ENCODE measurements at regions of chr9 and their contacts with region 1.

Region 1: GRCh38 chr9:137034863-137035761 is 3.2 kb upstream of the FUT7 start:
- DNase-seq: peak; percentile 79
- H3K4me3 Mint-ChIP-seq: peak overlapping the region; percentile 55
- H3K27ac Mint-ChIP-seq: no peak overlapping the region
- H3K4me1 Mint-ChIP-seq: peaks cover 8% of the 10 kb centered on the region
- H3K27me3 Mint-ChIP-seq: no peaks in the 10 kb centered on the region
- CTCF ChIP-seq: peak; percentile 64

Region 2: GRCh38 chr9:136787690-136788400 is 247.3 kb before region 1 on chr9:
- CTCF ChIA-PET with region 1: no interaction called
- intact Hi-C with region 1: loop called (anchors 2 kb)
- DNase-seq: peak; percentile 52
- H3K4me3 Mint-ChIP-seq: peak overlapping the region; percentile 43
- H3K27ac Mint-ChIP-seq: no peak overlapping the region
- H3K4me1 Mint-ChIP-seq: peaks cover 48% of the 10 kb centered on the region
- H3K27me3 Mint-ChIP-seq: no peaks in the 10 kb centered on the region
- CTCF ChIP-seq: peak; percentile 74

Region 3: GRCh38 chr9:136965771-136966484 is 69.2 kb before region 1 on chr9:
- CTCF ChIA-PET with region 1: no interaction called
- intact Hi-C with region 1: no loop called
- DNase-seq: no peak
- H3K4me3 Mint-ChIP-seq: no peak overlapping the region
- H3K27ac Mint-ChIP-seq: no peak overlapping the region
- H3K4me1 Mint-ChIP-seq: no peaks in the 10 kb centered on the region
- H3K27me3 Mint-ChIP-seq: no peaks in the 10 kb centered on the region
- CTCF ChIP-seq: no peak

Region 4: DNA sequence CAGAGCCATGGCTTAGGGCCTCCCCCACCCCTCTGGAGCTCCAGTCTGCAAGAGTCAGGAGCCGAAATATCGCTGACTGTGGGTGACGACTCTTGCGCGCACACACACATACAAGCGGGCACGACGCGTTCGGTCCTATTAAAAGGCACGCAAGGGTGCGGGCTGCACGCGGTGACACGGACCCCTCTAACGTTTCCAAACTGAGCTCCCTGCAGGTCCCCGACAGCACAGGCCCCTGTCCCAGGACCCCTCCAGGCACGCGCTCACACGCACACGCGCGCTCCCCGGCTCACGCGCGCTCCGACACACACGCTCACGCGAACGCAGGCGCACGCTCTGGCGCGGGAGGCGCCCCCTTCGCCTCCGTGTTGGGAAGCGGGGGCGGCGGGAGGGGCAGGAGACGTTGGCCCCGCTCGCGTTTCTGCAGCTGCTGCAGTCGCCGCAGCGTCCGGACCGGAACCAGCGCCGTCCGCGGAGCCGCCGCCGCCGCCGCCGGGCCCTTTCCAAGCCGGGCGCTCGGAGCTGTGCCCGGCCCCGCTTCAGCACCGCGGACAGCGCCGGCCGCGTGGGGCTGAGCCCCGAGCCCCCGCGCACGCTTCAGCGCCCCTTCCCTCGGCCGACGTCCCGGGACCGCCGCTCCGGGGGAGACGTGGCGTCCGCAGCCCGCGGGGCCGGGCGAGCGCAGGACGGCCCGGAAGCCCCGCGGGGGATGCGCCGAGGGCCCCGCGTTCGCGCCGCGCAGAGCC is 103.8 kb after region 1 on chr9 and contains the start of gene GRIN1:
- CTCF ChIA-PET with region 1: no interaction called
- intact Hi-C with region 1: no loop called
- DNase-seq: no peak
- H3K4me3 Mint-ChIP-seq: no peak within 1 kb of the TSS
- H3K27ac Mint-ChIP-seq: no peak within 1 kb of the TSS
- H3K4me1 Mint-ChIP-seq: no peaks in the 10 kb centered on the region
- H3K27me3 Mint-ChIP-seq: peaks cover 70% of the 10 kb centered on the region
- CTCF ChIP-seq: no peak
- total RNA-seq, gene GRIN1: 0.24 and 0.54 TPM in 2 replicates